Activated T-helper 1 cell treated with anti-CD3 and anti-CD28 coated beads, Interleukin-12 subunit alpha, Interleukin-12 subunit beta, Interleukin-2, Interleukin-4 antibody, amounts not matched to agents 30 ng/mL and 10 ng/mL and 1 ng/mL, durations not matched to agents 14 hours and 24 hours and 36 hours (primary cell): ENCODE measurements at regions of chr1 and their contacts with region 1.

Region 1: DNA sequence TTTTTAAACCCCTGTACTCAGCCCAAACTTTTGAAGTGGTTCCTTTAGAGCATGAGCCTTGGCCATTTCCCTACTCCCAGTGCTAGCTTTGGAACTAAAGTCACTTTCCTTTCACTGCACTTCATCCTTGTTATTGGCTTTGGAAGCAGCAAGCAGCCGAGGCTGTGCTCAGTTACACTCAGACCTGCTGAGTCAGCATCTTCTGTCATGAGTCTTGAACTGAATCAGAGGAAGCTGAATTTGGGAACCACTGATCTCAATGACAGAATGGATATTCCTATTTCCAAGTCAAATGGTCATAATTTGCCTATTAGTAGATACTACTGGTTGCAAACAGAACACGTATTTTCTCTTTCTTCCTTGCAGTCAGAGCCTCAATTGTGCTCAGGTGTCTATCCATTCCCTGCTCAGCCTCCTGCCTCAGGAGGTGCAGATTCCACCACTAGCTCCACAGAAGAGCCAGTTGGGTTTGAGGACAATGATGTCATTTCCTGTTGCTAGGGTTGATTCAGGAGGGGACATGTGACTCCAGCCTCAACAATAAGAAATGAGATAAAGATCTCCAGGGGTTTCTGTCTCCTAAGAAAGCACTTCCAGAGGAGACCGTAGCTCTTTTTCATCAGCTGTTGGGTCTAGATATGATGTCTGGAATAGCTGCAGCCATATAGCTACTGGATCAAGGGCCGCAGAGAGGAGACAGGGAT is 44.9 kb upstream of the NTPCR start:
- DNase-seq: no peak
- H3K4me3 Mint-ChIP-seq: peak overlapping the region; percentile 24
- H3K27ac Mint-ChIP-seq: peak overlapping the region; percentile 65
- H3K4me1 Mint-ChIP-seq: peaks cover 60% of the 10 kb centered on the region
- H3K27me3 Mint-ChIP-seq: no peaks in the 10 kb centered on the region

Region 2: GRCh38 chr1:232923739-232924386 is 18.4 kb after region 1 on chr1:
- intact Hi-C with region 1: loop called (anchors 1 kb)
- DNase-seq: peak; percentile 59
- H3K4me3 Mint-ChIP-seq: peak overlapping the region; percentile 46
- H3K27ac Mint-ChIP-seq: peak overlapping the region; percentile 93
- H3K4me1 Mint-ChIP-seq: peaks cover 37% of the 10 kb centered on the region
- H3K27me3 Mint-ChIP-seq: no peaks in the 10 kb centered on the region